HepG2 (cell line): ENCODE measurements at regions of chr12 and their contacts with region 1.

Region 1: GRCh38 chr12:56224102-56224701 is at the start of gene NABP2:
- DNase-seq: peak; percentile 92
- ATAC-seq: peak; percentile 85
- H3K4me3 ChIP-seq: peak within 1 kb of the TSS; percentile 68 to 79 (median 78)
- H3K27ac ChIP-seq: peak within 1 kb of the TSS; percentile 26
- H3K4me1 ChIP-seq: peaks cover 39% of the 10 kb centered on the region
- H3K27me3 ChIP-seq: no peaks in the 10 kb centered on the region; a peak in 1 of 5 replicates
- CTCF ChIP-seq: peak; percentile 93
- EP300 ChIP-seq: no peak
- POLR2A ChIP-seq: no peak
- RAD21 ChIP-seq: peak; percentile 80
- total RNA-seq, gene NABP2: 31.2 and 33.2 TPM in 2 replicates

Region 2: DNA sequence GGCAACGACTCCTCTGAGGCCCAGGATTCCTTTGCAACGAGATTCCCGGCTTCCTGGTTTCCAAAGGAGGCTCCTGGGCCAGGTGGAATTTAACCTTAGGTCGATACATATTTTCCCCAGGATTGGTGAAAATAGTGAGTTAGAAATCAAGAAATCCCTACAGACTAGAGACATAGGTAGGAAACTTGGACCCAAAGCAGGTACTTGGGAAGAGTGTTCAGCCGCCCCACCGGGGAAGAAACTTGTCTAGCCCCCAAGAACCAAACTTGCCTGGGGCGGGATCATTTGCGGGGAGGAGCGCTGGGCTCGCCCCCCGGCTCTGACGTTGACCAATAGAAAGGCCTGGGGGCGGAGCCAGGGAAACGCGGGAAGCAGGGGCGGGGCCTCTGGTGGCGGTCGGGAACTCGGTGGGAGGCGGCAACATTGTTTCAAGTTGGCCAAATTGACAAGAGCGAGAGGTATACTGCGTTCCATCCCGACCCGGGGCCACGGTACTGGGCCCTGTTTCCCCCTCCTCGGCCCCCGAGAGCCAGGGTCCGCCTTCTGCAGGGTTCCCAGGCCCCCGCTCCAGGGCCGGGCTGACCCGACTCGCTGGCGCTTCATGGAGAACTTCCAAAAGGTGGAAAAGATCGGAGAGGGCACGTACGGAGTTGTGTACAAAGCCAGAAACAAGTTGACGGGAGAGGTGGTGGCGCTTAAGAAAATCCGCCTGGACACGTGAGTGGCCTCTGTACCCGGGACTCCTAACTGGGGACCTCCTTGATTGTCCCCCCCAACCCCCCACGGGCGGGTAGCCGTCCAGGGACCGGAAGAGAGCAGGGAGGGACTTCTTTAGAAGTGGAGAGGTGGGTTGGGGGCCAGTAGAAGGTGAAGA is 257.6 kb before region 1 on chr12 and contains the start of gene CDK2:
- CTCF ChIA-PET with region 1: no interaction called
- POLR2A ChIA-PET with region 1: no interaction called
- in situ Hi-C with region 1: no loop called
- intact Hi-C with region 1: no loop called
- DNase-seq: peak; percentile 76
- ATAC-seq: peak; percentile 93
- H3K4me3 ChIP-seq: peak within 1 kb of the TSS; percentile 87 to 93 (median 90)
- H3K27ac ChIP-seq: peak within 1 kb of the TSS; percentile 69
- H3K4me1 ChIP-seq: peaks cover 29% of the 10 kb centered on the region
- H3K27me3 ChIP-seq: no peaks in the 10 kb centered on the region
- CTCF ChIP-seq: no peak
- EP300 ChIP-seq: no peak
- POLR2A ChIP-seq: peak; percentile 34 to 73; a peak in 2 of 4 replicates
- RAD21 ChIP-seq: no peak; the same call in 1 of the 2 replicates
- total RNA-seq, gene CDK2: 47.5 and 52.0 TPM in 2 replicates

Region 3: GRCh38 chr12:56104109-56104814 is 119.9 kb before region 1 on chr12 and contains the start of gene PA2G4:
- CTCF ChIA-PET with region 1: no interaction called
- POLR2A ChIA-PET with region 1: interaction called, 12 read pairs
- in situ Hi-C with region 1: no loop called
- intact Hi-C with region 1: no loop called
- DNase-seq: peak; percentile 97
- ATAC-seq: peak; percentile 94
- H3K4me3 ChIP-seq: peak within 1 kb of the TSS; percentile 50 to 85 (median 74)
- H3K27ac ChIP-seq: peak within 1 kb of the TSS; percentile 76
- H3K4me1 ChIP-seq: peaks cover 35% of the 10 kb centered on the region
- H3K27me3 ChIP-seq: no peaks in the 10 kb centered on the region
- CTCF ChIP-seq: 0 out of 2 replicates have a peak, but pooled peaks have one; percentile 10
- EP300 ChIP-seq: peak in 1 of 2 experiments; percentile 21; a peak in 2 of 4 replicates
- POLR2A ChIP-seq: peak; percentile 91
- RAD21 ChIP-seq: no peak
- total RNA-seq, gene PA2G4: 240 and 281 TPM in 2 replicates

Region 4: GRCh38 chr12:56127888-56128669 is 96.1 kb before region 1 on chr12 and contains the start of gene ESYT1:
- CTCF ChIA-PET with region 1: interaction called, 3 read pairs
- POLR2A ChIA-PET with region 1: interaction called, 30 read pairs
- in situ Hi-C with region 1: no loop called
- intact Hi-C with region 1: no loop called
- DNase-seq: peak; percentile 100
- ATAC-seq: peak; percentile 90
- H3K4me3 ChIP-seq: peak within 1 kb of the TSS; percentile 72 to 89 (median 83)
- H3K27ac ChIP-seq: peak within 1 kb of the TSS; percentile 65
- H3K4me1 ChIP-seq: peaks cover 61% of the 10 kb centered on the region
- H3K27me3 ChIP-seq: no peaks in the 10 kb centered on the region
- CTCF ChIP-seq: peak; percentile 42
- EP300 ChIP-seq: no peak
- POLR2A ChIP-seq: peak; percentile 90 to 96
- RAD21 ChIP-seq: 0 out of 2 replicates have a peak, but pooled peaks have one; percentile 11
- total RNA-seq, gene ESYT1: 30.1 and 66.9 TPM in 2 replicates

Region 5: DNA sequence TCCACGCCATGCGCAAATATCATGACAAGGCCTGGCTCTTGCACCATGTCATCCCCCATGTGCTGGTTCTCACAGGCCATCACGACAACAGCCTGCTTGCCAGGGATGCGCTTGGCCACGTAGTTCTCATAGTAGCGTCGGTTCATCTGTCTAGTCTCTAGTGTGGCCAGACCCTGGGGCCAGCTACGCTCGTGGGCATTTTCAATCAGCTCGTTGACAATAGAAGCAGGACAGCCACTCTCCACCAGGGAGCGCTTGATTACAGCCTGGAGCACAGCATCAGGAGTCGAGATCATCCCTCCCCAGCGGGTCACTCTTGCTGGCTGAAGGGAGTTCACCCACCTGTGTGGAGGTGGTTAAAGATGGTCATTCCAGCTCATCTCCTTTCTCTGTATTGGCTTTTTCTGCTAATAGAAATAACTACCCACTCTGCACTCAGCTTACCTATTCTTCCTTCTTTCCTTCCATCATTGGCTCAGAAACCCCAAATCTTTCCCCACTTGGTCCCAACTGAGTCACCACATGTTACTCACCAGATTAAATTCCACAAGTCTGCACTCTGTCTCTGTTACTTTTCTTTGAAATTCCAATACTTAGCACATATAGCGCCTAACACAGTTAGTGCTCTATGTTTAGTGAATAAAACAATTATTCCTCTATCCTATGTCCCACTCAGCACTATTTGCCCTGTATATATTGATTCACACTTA is 17.6 kb before region 1 on chr12:
- CTCF ChIA-PET with region 1: interaction called, 15 read pairs
- POLR2A ChIA-PET with region 1: interaction called, 34 read pairs
- in situ Hi-C with region 1: no loop called
- intact Hi-C with region 1: loop called (anchors 2 kb)
- DNase-seq: peak; percentile 56
- ATAC-seq: peak; percentile 96
- H3K4me3 ChIP-seq: no peak overlapping the region
- H3K27ac ChIP-seq: no peak overlapping the region
- H3K4me1 ChIP-seq: no peaks in the 10 kb centered on the region
- H3K27me3 ChIP-seq: no peaks in the 10 kb centered on the region
- CTCF ChIP-seq: peak; percentile 83
- EP300 ChIP-seq: no peak
- POLR2A ChIP-seq: no peak
- RAD21 ChIP-seq: peak; percentile 58; the same call in 1 of the 2 replicates

Region 6: DNA sequence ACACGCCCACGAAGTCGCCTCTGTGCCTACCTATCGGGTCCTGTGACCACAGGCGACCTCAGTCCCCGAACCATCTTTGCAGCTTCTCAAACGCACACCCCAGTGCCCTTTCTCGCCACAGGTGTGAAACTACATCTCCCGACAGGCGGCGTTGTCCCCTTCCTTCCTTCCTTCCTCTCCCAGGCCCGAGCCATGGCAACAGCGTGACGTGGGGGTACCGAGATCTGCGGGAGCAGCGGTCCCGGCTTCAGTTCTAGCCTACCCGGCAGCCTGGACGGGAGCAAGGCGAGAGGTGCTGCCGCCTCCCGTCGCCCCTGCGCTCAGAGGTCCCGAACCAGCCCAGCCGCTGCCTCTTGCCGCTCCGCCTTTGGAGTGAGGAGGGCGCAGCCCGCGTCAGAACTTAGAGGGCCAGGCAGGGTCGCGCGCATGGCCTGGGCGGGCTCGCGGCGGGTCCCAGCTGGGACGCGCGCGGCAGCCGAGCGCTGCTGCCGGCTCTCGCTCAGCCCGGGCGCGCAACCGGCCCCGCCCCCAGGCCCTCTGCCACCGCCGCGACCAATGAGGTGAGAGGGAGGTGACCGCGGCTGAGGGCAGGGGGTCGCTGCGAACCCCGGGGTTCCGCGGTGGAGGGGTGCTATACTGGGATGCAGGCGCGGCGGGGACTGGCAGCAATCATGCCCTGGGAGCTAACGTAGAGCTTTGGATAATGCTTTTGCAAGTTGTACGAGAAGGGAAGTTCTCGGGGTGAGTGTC is 42.7 kb after region 1 on chr12 and contains the start of gene COQ10A:
- CTCF ChIA-PET with region 1: no interaction called
- POLR2A ChIA-PET with region 1: interaction called, 47 read pairs
- in situ Hi-C with region 1: no loop called
- intact Hi-C with region 1: no loop called
- DNase-seq: peak; percentile 83
- ATAC-seq: peak; percentile 90
- H3K4me3 ChIP-seq: peak within 1 kb of the TSS; percentile 54 to 91 (median 83)
- H3K27ac ChIP-seq: peak within 1 kb of the TSS; percentile 82
- H3K4me1 ChIP-seq: peaks cover 18% of the 10 kb centered on the region
- H3K27me3 ChIP-seq: no peaks in the 10 kb centered on the region; a peak in 1 of 5 replicates
- CTCF ChIP-seq: peak; percentile 89
- EP300 ChIP-seq: no peak
- POLR2A ChIP-seq: peak; percentile 90 to 92
- RAD21 ChIP-seq: peak; percentile 62
- total RNA-seq, gene COQ10A: 18.6 and 21.0 TPM in 2 replicates

Region 7: GRCh38 chr12:56315622-56316473 is 91.6 kb after region 1 on chr12 and contains the start of gene CNPY2:
- CTCF ChIA-PET with region 1: no interaction called
- POLR2A ChIA-PET with region 1: interaction called, 15 read pairs
- in situ Hi-C with region 1: no loop called
- intact Hi-C with region 1: no loop called
- DNase-seq: peak; percentile 99
- ATAC-seq: peak; percentile 96
- H3K4me3 ChIP-seq: peak within 1 kb of the TSS; percentile 83 to 90 (median 84)
- H3K27ac ChIP-seq: peak within 1 kb of the TSS; percentile 83
- H3K4me1 ChIP-seq: peaks cover 24% of the 10 kb centered on the region
- H3K27me3 ChIP-seq: no peaks in the 10 kb centered on the region; a peak in 1 of 5 replicates
- CTCF ChIP-seq: peak; percentile 98
- EP300 ChIP-seq: 0 out of 4 replicates have a peak, but pooled peaks of 1 of the 2 experiments have one; percentile 25
- POLR2A ChIP-seq: peak; percentile 91
- RAD21 ChIP-seq: peak; percentile 74
- total RNA-seq, gene CNPY2: 246 and 356 TPM in 2 replicates

Region 8: DNA sequence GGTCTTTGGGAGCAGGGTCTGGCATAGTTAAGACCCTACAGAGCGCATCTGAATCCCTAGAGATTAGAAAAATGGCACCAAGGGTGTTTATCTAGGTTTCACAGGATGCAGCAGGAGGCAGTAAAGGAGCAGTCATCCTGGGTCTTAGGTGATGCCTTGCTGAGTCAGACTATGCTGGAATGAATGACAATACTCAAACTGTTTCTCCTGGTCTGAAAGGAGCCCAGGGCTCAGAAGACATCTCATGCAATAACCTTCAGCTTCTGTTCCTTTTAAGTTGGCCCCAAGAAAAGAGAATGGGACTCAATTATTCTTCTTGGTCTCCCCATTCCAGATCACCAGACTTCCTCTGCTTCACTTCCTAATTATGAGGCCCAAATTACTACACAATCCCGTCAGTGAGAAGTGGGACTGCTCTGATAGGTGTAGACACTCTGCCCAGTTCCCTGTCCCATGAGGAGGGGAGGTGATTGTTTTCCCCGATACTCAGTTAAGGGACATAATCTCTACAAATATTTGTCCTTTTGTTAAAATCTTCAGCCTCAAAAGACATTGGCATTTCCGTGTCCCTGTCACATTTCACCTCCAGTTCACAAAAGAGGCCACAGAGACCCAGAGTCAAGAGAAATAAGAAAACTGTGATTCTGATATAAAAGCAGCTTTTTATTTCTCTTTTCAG is 153.2 kb after region 1 on chr12:
- CTCF ChIA-PET with region 1: no interaction called
- POLR2A ChIA-PET with region 1: no interaction called
- in situ Hi-C with region 1: no loop called
- intact Hi-C with region 1: no loop called
- DNase-seq: no peak
- ATAC-seq: peak; percentile 77
- H3K4me3 ChIP-seq: peak overlapping the region in 2 of 3 experiments; percentile 5 to 18; a peak in 2 of 6 replicates
- H3K27ac ChIP-seq: no peak overlapping the region
- H3K4me1 ChIP-seq: peaks cover 45% of the 10 kb centered on the region
- H3K27me3 ChIP-seq: peaks cover 0 to 7% of the 10 kb centered on the region in 2 experiments; a peak in 1 of 5 replicates
- CTCF ChIP-seq: peak; percentile 57
- EP300 ChIP-seq: no peak
- POLR2A ChIP-seq: no peak
- RAD21 ChIP-seq: 0 out of 2 replicates have a peak, but pooled peaks have one; percentile 30